ENCODE measurements at regions of chr10 and their contacts with region 1.

Region 1: GRCh38 chr10:122953827-122954730 is at the start of gene C10orf88:
- DNase-seq: peak; percentile 98
- ATAC-seq: peak; percentile 98
- H3K4me3 Mint-ChIP-seq: peak within 1 kb of the TSS; percentile 77
- H3K27ac Mint-ChIP-seq: peak within 1 kb of the TSS; percentile 74
- H3K4me1 Mint-ChIP-seq: peaks cover 22% of the 10 kb centered on the region
- H3K27me3 Mint-ChIP-seq: no peaks in the 10 kb centered on the region
- total RNA-seq, gene C10orf88: 8.6 to 9.0 TPM

Region 2: GRCh38 chr10:121974535-121975294 is 979.4 kb before region 1 on chr10 and contains the start of gene NSMCE4A:
- CTCF ChIA-PET with region 1: no interaction called
- POLR2A ChIA-PET with region 1: no interaction called
- intact Hi-C with region 1: loop called in 1 of 2 experiments (anchors 10 kb)
- DNase-seq: peak; percentile 85
- ATAC-seq: peak; percentile 87
- H3K4me3 Mint-ChIP-seq: peak within 1 kb of the TSS; percentile 81
- H3K27ac Mint-ChIP-seq: peak within 1 kb of the TSS; percentile 42
- H3K4me1 Mint-ChIP-seq: peaks cover 19% of the 10 kb centered on the region
- H3K27me3 Mint-ChIP-seq: no peaks in the 10 kb centered on the region
- total RNA-seq, gene NSMCE4A: 56.3 to 56.4 TPM

Region 3: GRCh38 chr10:122879339-122880273 is 74.5 kb before region 1 on chr10 and contains the start of gene FAM24B:
- CTCF ChIA-PET with region 1: interaction called, 3 read pairs
- POLR2A ChIA-PET with region 1: no interaction called
- intact Hi-C with region 1: loop called (anchors 1 to 2 kb)
- DNase-seq: peak; percentile 96
- ATAC-seq: peak; percentile 90
- H3K4me3 Mint-ChIP-seq: peak within 1 kb of the TSS; percentile 92
- H3K27ac Mint-ChIP-seq: peak within 1 kb of the TSS; percentile 93
- H3K4me1 Mint-ChIP-seq: peaks cover 53% of the 10 kb centered on the region
- H3K27me3 Mint-ChIP-seq: no peaks in the 10 kb centered on the region
- total RNA-seq, gene FAM24B: 7.0 to 9.5 TPM

Region 4: DNA sequence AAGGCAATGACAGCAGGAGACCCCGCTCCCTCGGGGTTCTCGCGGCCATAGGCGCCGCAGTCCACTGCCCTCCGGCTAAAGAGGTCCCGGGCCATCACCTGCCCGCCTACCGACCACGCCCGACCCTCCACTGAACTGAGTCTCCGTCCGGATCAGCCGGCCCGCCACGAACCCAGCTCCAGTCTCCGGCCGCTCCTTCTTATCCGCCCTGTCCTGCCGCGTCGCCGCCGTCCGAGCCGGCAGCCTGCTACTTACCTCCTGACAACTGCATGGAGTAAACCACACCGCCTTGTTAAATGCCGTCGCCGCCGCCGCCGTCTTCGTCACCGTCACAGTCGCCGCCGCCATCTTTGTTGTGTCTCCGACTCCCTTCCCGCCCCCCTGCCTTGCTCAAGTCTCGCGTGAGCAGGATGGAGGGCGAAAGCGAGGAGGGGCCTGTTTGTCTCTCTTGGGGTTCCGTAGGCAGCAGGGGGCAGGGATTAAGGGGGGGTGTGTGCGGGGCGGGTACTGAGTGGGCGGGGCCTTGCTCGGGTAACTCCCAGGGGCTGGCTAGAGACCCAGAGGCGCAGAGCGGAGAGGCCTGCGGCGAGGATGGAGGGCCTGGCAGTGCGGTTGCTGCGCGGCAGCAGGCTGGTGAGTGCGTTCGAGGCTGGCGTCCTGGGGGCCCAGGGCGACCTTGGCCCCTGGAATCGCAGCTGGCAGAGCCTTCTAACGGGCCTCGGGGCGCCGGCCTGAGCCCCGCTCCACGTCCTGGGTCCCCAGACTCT is 54.5 kb after region 1 on chr10 and contains the starts of genes ACADSB and IKZF5:
- CTCF ChIA-PET with region 1: interaction called, 3 read pairs
- POLR2A ChIA-PET with region 1: interaction called, 5 read pairs
- intact Hi-C with region 1: loop called (anchors 1 kb)
- DNase-seq: peak; percentile 98
- ATAC-seq: peak; percentile 87
- H3K4me3 Mint-ChIP-seq: peak within 1 kb of the TSS; percentile 95
- H3K27ac Mint-ChIP-seq: peak within 1 kb of the TSS; percentile 99
- H3K4me1 Mint-ChIP-seq: peaks cover 42% of the 10 kb centered on the region
- H3K27me3 Mint-ChIP-seq: no peaks in the 10 kb centered on the region
- total RNA-seq, gene ACADSB: 24.0 to 25.5 TPM
- total RNA-seq, gene IKZF5: 9.4 to 14.1 TPM